Esophagus muscularis mucosa (tissue), 4 donors: ENCODE measurements at regions of chr3 and their contacts with region 1.

Region 1: GRCh38 chr3:149384911-149385321 is 7.5 kb upstream of the TM4SF1 start:
- DNase-seq: no peak
- H3K4me3 ChIP-seq: no peak overlapping the region
- H3K27ac ChIP-seq: peak overlapping the region in 3 of 4 donors; percentile 15 to 77 (median 43)
- H3K4me1 ChIP-seq: peaks cover 14 to 31% (median 22%) of the 10 kb centered on the region in 4 donors
- H3K27me3 ChIP-seq: no peaks in the 10 kb centered on the region
- CTCF ChIP-seq: no peak
- EP300 ChIP-seq: no peak
- POLR2A ChIP-seq: no peak

Region 2: GRCh38 chr3:149129326-149130205 is 255.3 kb before region 1 on chr3 and contains the start of gene HPS3:
- intact Hi-C with region 1: loop called (anchors 5 kb)
- DNase-seq: peak; percentile 97
- H3K4me3 ChIP-seq: peak within 1 kb of the TSS; percentile 78 to 98 (median 84)
- H3K27ac ChIP-seq: peak within 1 kb of the TSS; percentile 83 to 88 (median 86)
- H3K4me1 ChIP-seq: peaks cover 20 to 43% (median 40%) of the 10 kb centered on the region in 4 donors
- H3K27me3 ChIP-seq: no peaks in the 10 kb centered on the region
- CTCF ChIP-seq: peak in 1 of 3 experiments; percentile 6
- EP300 ChIP-seq: no peak
- POLR2A ChIP-seq: peak; percentile 60
- total RNA-seq, gene HPS3: 10.6 to 15.9 (median 12.4) TPM